Esophagus muscularis mucosa (tissue), 4 donors: ENCODE measurements at regions of chr14 and their contacts with region 1.

Region 1: DNA sequence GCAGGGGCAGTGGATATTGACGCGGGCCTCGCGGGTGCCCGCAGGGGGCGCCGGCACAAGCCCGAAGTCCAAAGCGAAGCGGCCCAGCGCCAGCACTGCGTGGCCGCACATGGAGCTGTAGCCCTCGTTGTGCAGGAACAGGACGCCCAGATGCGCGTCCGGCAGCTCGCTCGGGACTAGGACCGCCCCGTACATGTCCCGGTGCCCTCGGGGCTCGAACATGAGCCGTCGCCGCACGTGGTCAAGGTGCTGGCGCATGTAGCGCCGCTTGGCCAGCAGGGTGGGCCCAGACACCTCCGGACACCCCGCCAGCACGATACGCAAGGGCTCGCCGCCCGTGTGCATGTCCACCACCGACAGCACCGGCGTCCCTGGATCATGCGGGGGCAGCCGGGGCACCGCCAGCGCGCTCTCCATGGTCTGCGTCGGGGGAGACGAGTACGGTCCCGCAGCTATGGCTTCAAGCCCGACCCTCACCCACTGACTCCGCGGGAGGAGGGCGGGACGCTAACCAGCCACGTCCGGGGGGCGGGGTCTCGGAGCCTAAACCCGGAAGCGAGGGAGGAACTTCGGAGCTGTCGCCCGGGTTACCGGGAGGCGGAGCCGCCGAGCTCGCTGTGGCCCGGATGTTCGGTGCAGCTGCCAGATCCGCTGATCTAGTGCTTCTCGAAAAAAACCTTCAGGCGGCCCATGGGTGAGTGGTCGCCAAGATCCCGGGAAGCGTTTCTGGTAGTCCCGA is at the starts of genes JKAMP and L3HYPDH:
- DNase-seq: peak; percentile 98
- H3K4me3 ChIP-seq: peak within 1 kb of the TSS; percentile 72 to 83 (median 82)
- H3K27ac ChIP-seq: peak within 1 kb of the TSS; percentile 90 to 97 (median 93)
- H3K4me1 ChIP-seq: peaks cover 38 to 74% (median 65%) of the 10 kb centered on the region in 4 donors
- H3K27me3 ChIP-seq: no peaks in the 10 kb centered on the region
- CTCF ChIP-seq: peak; percentile 64 to 78 (median 68)
- EP300 ChIP-seq: no peak
- POLR2A ChIP-seq: peak; percentile 89
- total RNA-seq, gene JKAMP: 23.3 to 27.8 (median 26.3) TPM
- total RNA-seq, gene L3HYPDH: 20.2 to 32.2 (median 26.0) TPM

Region 2: DNA sequence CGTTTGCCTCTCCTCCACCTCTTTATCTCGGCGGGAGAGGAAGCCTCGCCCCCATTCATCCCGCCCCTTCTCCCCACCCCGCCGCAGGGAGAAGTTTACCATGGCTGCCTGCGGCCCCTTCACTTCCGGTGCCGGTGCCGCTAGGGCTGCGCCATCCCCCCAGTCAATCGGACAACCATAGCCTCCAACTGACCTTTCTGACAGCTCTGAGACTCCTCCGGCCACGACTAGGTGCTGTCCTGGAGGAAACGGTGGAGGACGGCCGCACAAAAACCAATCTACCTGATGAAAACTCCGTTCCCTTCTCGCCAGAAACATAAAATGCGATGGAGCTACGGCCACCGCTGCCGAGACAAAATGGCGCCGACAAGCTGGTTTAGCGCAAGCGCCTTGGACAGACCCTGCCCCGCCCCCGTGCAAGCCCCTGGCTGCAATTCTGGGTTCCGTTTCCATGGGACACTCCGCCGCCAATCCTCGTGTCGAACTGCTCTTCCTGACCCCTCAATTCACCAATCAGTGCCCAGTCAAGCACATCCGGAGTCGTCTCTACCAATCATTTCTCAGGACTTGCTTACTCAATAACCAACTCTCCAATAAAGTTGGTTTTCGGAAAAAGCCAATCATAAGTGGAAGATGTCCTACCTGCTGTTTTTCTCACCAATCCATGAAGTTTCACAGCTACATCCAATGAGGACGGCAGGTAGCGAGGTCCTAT is 1186.2 kb before region 1 on chr14:
- intact Hi-C with region 1: loop called (anchors 5 kb)
- DNase-seq: peak; percentile 99
- H3K4me3 ChIP-seq: peak overlapping the region; percentile 66 to 96 (median 92)
- H3K27ac ChIP-seq: peak overlapping the region; percentile 93 to 97 (median 94)
- H3K4me1 ChIP-seq: peaks cover 33 to 59% (median 55%) of the 10 kb centered on the region in 4 donors
- H3K27me3 ChIP-seq: no peaks in the 10 kb centered on the region
- CTCF ChIP-seq: peak in 1 of 3 experiments; percentile 2
- EP300 ChIP-seq: no peak
- POLR2A ChIP-seq: peak; percentile 64